ENCODE measurements at regions of chr11 and their contacts with region 1.

Region 1: DNA sequence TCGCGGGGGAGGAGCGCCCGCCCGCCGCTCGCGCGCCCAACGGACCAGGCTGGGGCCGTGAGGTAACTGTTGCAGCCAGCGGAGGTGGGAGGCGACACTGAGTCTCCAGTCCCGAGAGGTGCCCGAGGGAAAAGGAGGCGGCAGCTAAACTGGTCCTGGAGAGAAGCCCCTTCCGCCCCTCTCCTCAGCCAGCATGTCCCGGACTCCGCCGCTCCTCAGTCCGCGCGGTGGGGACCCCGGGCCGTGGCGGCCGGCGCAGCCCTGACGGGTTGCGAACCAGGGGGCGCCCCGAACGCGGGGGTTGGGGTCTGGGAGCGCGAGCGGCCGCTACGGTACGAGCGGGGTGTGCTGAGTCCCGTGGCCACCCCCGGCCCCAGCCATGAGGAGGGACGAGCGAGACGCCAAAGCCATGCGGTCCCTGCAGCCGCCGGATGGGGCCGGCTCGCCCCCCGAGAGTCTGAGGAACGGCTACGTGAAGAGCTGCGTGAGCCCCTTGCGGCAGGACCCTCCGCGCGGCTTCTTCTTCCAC is at the start of gene PDE3B:
- DNase-seq: peak in 3 of 4 experiments; percentile 89 to 93 (median 93)
- ATAC-seq: peak; percentile 82
- H3K4me3 ChIP-seq: peak within 1 kb of the TSS; percentile 77
- H3K27ac ChIP-seq: peak within 1 kb of the TSS; percentile 92
- H3K4me1 ChIP-seq: peaks cover 16 to 21% of the 10 kb centered on the region in 2 experiments
- H3K27me3 ChIP-seq: no peaks in the 10 kb centered on the region
- CTCF ChIP-seq: peak in 2 of 3 experiments; percentile 31 to 42; a peak in 3 of 6 replicates
- EP300 ChIP-seq: peak; percentile 60; the same call in 1 of the 2 replicates
- POLR2A ChIP-seq: peak; percentile 87
- RAD21 ChIP-seq: peak in 1 of 2 experiments; percentile 30; a peak in 3 of 4 replicates
- polyA plus RNA-seq, gene PDE3B: 2.3 to 2.9 TPM

Region 2: GRCh38 chr11:14537134-14537599 is 106.6 kb before region 1 on chr11:
- CTCF ChIA-PET with region 1: interaction called, 4 read pairs
- POLR2A ChIA-PET with region 1: interaction called, 3 read pairs
- in situ Hi-C with region 1: no loop called
- intact Hi-C with region 1: loop called (anchors 5 kb)
- DNase-seq: peak; percentile 54 to 64 (median 61)
- ATAC-seq: peak; percentile 80
- H3K4me3 ChIP-seq: no peak overlapping the region
- H3K27ac ChIP-seq: peak overlapping the region; percentile 14; the same call in 1 of the 3 replicates
- H3K4me1 ChIP-seq: peaks cover 0 to 7% of the 10 kb centered on the region in 2 experiments; a peak in 3 of 5 replicates
- H3K27me3 ChIP-seq: no peaks in the 10 kb centered on the region
- CTCF ChIP-seq: peak; percentile 49 to 84 (median 72); a peak in 5 of 6 replicates
- EP300 ChIP-seq: no peak
- POLR2A ChIP-seq: no peak
- RAD21 ChIP-seq: peak; percentile 58 to 79

Region 3: DNA sequence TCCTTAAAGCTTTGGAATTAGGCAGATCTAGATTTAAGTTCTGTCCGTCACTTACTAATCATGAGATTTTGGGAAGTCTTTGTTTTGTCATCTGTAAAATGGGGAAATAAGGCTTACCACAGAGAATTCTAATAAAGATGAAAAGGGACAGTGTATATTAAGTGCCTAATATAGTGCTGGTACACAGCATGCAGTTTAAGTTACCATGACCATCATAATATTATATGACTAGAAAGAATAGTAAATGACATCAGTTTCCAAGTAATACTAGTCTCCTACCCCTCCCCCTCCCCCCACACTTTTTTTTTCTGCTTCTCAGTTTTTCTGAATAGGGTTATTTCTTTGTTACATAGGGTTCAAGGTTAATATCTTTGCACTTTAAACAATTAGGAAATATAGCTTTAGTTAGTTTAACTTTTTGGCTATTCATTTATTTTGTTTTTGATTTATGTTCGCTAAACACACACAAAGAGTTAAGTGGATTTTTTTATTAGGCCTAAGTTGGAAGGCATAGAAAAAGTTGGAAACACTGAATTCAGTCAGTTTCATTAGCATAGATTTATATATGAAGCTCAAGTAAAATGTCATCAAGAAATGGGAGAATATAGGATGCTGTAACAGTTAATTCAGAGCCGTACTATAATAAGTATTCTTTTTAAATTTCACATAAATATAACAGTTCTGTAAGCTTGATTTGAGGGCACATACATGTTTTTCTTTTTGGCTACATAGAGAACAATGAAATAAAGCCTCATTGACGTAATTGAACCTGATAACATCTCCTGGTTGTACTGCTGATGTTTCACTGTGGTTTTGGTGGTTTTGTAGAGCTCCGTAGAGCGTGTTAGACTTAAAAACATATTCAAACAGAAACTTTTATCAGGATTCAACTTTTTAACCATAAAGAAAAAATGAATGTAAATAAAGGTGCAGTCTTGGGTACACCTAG is 121.1 kb after region 1 on chr11:
- CTCF ChIA-PET with region 1: no interaction called
- POLR2A ChIA-PET with region 1: interaction called, 4 read pairs
- in situ Hi-C with region 1: no loop called
- intact Hi-C with region 1: loop called (anchors 5 kb)
- DNase-seq: peak; percentile 9 to 70 (median 34)
- ATAC-seq: peak; percentile 85
- H3K4me3 ChIP-seq: no peak overlapping the region
- H3K27ac ChIP-seq: peak overlapping the region; percentile 45; the same call in 1 of the 3 replicates
- H3K4me1 ChIP-seq: peaks cover 0 to 8% of the 10 kb centered on the region in 2 experiments; a peak in 2 of 5 replicates
- H3K27me3 ChIP-seq: no peaks in the 10 kb centered on the region
- CTCF ChIP-seq: no peak
- EP300 ChIP-seq: peak; percentile 62
- POLR2A ChIP-seq: no peak
- RAD21 ChIP-seq: no peak; a peak in 1 of 4 replicates

Region 4: DNA sequence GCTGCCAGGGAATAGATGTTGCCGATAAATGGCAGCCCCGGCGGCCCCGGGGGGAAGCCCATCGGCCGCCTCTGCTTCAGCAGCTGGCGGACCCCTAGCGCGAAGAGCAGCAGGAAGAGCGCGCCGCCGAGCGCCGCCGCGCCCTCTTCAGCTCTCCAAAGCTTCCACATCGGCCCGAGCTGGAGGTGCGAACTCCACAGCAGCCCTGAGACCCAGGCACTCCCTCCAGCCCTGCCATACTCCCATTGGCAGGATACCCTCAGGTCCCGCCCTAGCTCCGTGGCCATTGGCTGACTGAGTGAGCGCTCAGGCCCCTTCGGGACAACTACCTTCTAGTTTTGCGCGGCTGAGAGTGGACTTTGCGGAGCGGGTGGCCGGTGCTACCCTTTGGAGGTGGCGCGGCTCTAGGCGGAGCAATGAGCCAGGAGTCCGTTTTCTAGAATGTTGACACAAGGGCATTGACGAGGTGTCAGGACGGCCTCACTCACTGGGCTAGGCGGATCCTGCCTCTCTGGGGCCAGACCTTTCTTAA is 248.3 kb after region 1 on chr11 and contains the start of gene CYP2R1:
- CTCF ChIA-PET with region 1: no interaction called
- POLR2A ChIA-PET with region 1: interaction called, 6 read pairs
- in situ Hi-C with region 1: loop called (anchors 10 kb)
- intact Hi-C with region 1: loop called (anchors 5 kb)
- DNase-seq: peak; percentile 97 to 100 (median 99)
- ATAC-seq: peak; percentile 97
- H3K4me3 ChIP-seq: peak within 1 kb of the TSS; percentile 54
- H3K27ac ChIP-seq: peak within 1 kb of the TSS; percentile 79
- H3K4me1 ChIP-seq: peaks cover 23% of the 10 kb centered on the region in 2 experiments
- H3K27me3 ChIP-seq: no peaks in the 10 kb centered on the region
- CTCF ChIP-seq: peak in 2 of 3 experiments; percentile 15 to 17; a peak in 2 of 6 replicates
- EP300 ChIP-seq: no peak
- POLR2A ChIP-seq: no peak
- RAD21 ChIP-seq: no peak
- polyA plus RNA-seq, gene CYP2R1: 26.6 to 29.4 TPM

Measured in K562 (cell line).